OCI-LY7 (cell line): ENCODE measurements at regions of chr1 and their contacts with region 1.

Region 1: DNA sequence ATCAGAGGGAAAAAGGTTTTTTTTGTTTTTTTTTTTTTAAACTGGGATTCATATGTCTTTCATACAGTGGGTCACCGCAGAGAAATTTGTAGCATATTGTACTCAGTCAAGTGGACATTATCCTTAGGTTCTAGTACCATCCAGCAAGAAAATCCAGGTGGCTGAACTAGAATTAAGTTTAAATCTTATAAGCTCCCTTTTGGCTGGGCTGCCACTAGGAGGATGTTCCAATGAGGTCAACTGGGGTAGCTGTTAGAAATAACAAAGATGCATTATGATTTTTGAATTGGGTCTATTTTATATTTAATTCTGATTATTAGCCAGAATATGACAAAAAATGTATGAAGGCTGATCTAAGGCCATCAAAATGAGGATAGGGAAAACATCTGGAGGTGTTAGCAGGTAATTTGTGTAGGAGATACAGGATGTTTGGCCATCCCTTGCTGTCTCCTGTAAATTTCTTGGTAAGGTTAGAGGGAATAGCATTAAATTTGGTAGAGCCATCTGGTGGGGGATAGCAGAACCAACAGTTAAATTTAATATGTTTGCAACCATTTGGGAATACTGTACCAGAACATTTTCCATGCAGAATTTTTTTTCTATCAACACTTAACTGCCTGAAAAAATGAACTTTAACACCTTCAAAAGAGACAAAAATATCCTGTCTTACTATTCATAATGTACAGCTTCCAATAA is 568.5 kb upstream of the B3GALT2 start:
- DNase-seq: peak; percentile 4
- H3K4me3 ChIP-seq: no peak overlapping the region
- H3K27ac ChIP-seq: no peak overlapping the region
- H3K4me1 ChIP-seq: no peaks in the 10 kb centered on the region
- CTCF ChIP-seq: peak; percentile 72

Region 2: GRCh38 chr1:193406901-193407300 is 348.0 kb before region 1 on chr1:
- CTCF ChIA-PET with region 1: no interaction called
- POLR2A ChIA-PET with region 1: no interaction called
- intact Hi-C with region 1: loop called (anchors 5 kb)
- DNase-seq: peak; percentile 77
- H3K4me3 ChIP-seq: no peak overlapping the region
- H3K27ac ChIP-seq: no peak overlapping the region
- H3K4me1 ChIP-seq: no peaks in the 10 kb centered on the region
- CTCF ChIP-seq: peak; percentile 97